ENCODE measurements at regions of chr11 and their contacts with region 1.

Region 1: DNA sequence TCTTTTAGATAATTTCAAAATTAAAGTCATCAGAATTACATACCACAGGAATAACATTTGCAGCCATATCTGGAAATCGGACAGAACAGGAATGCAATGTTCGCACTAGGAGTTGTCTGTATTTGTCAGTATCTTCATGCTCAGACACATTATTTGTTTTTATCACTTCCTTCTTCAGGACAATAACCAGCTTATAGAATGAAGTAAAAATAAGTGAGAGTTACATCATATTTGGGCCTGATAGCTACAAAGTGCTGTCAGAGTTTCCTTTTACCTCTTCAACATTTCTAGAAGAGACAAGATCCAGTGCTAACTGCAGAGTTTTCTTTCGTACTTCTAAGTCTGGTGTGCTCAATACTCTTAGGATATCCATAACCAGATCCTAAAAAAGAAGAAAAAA is 18.9 kb downstream of the COPB1 start:
- DNase-seq: no peak
- ATAC-seq: no peak
- H3K4me3 ChIP-seq: no peak overlapping the region
- H3K4me3 Mint-ChIP-seq: no peak overlapping the region
- H3K27ac ChIP-seq: no peak overlapping the region
- H3K27ac Mint-ChIP-seq: no peak overlapping the region
- H3K4me1 ChIP-seq: no peaks in the 10 kb centered on the region
- H3K4me1 Mint-ChIP-seq: peaks cover 7 to 17% (median 15%) of the 10 kb centered on the region in 3 donors
- H3K27me3 ChIP-seq: no peaks in the 10 kb centered on the region
- H3K27me3 Mint-ChIP-seq: no peaks in the 10 kb centered on the region

Region 2: DNA sequence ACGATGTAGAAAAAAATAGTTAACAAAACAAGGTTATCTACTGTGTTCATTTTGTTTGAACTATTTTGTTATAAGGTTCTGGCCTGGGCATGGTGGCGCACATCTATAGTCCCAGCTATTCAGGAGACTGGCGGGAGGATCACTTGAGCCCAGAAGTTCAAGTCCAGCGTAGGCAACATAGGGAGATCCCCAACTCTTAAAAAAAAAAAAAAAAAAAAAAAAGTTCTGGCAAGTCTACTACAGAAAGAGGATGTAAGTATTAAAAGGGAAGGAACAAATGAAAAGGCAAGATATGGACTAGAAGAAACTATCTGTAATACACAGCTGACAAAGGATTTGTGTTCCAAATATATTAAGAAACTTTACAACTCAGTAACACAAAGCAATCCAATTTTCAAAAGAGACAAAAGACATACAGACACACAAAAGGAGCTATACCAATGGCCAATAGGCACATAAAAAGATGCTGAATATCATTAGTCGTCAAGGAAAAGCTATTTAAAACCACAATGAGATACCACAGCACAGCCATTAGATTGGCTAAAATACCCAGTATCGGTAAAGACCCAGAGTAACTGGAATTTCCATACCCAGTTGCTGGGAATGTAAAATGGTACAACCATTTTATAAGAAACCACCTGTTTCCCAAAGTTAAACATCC is 149.1 kb before region 1 on chr11:
- CTCF ChIA-PET with region 1: no interaction called
- POLR2A ChIA-PET with region 1: no interaction called
- DNase-seq: no peak
- ATAC-seq: no peak
- H3K4me3 ChIP-seq: no peak overlapping the region
- H3K4me3 Mint-ChIP-seq: no peak overlapping the region
- H3K27ac ChIP-seq: no peak overlapping the region
- H3K27ac Mint-ChIP-seq: no peak overlapping the region
- H3K4me1 ChIP-seq: peaks cover 0 to 5% of the 10 kb centered on the region in 2 experiments
- H3K4me1 Mint-ChIP-seq: peaks cover 41 to 48% (median 44%) of the 10 kb centered on the region in 3 donors
- H3K27me3 ChIP-seq: no peaks in the 10 kb centered on the region
- H3K27me3 Mint-ChIP-seq: no peaks in the 10 kb centered on the region

Region 3: GRCh38 chr11:14499554-14500180 is 19.0 kb after region 1 on chr11 and contains the start of gene COPB1:
- CTCF ChIA-PET with region 1: interaction called in 1 of 2 experiments, 3 read pairs
- POLR2A ChIA-PET with region 1: interaction called in 1 of 2 experiments, 11 read pairs
- DNase-seq: peak; percentile 74 to 96 (median 92)
- ATAC-seq: peak; percentile 93 to 95 (median 94)
- H3K4me3 ChIP-seq: peak within 1 kb of the TSS; percentile 77 to 91
- H3K4me3 Mint-ChIP-seq: peak within 1 kb of the TSS; percentile 87 to 98 (median 98)
- H3K27ac ChIP-seq: peak within 1 kb of the TSS; percentile 63
- H3K27ac Mint-ChIP-seq: peak within 1 kb of the TSS; percentile 98
- H3K4me1 ChIP-seq: peaks cover 3 to 11% of the 10 kb centered on the region in 2 experiments
- H3K4me1 Mint-ChIP-seq: peaks cover 48 to 58% (median 49%) of the 10 kb centered on the region in 3 donors
- H3K27me3 ChIP-seq: no peaks in the 10 kb centered on the region
- H3K27me3 Mint-ChIP-seq: no peaks in the 10 kb centered on the region
- total RNA-seq, gene COPB1: 65.1 to 80.8 (median 78.1) TPM

Region 4: GRCh38 chr11:15610881-15611280 is 1130.2 kb after region 1 on chr11:
- CTCF ChIA-PET with region 1: no interaction called
- POLR2A ChIA-PET with region 1: interaction called in 1 of 2 experiments, 13 read pairs
- DNase-seq: no peak
- ATAC-seq: no peak
- H3K4me3 ChIP-seq: no peak overlapping the region
- H3K4me3 Mint-ChIP-seq: no peak overlapping the region
- H3K27ac ChIP-seq: no peak overlapping the region
- H3K27ac Mint-ChIP-seq: no peak overlapping the region
- H3K4me1 ChIP-seq: no peaks in the 10 kb centered on the region
- H3K4me1 Mint-ChIP-seq: no peaks in the 10 kb centered on the region
- H3K27me3 ChIP-seq: no peaks in the 10 kb centered on the region
- H3K27me3 Mint-ChIP-seq: peaks cover 0 to 7% of the 10 kb centered on the region in 2 donors

Measured in T-cell (primary cell).